Calu3 (cell line): ENCODE measurements at regions of chr10 and their contacts with region 1.

Region 1: GRCh38 chr10:3248888-3249758 is 76.5 kb upstream of the PITRM1 start:
- DNase-seq: peak; percentile 25
- H3K4me3 Mint-ChIP-seq: no peak overlapping the region
- H3K27ac Mint-ChIP-seq: peak overlapping the region; percentile 61
- H3K4me1 Mint-ChIP-seq: peaks cover 8% of the 10 kb centered on the region
- H3K27me3 Mint-ChIP-seq: peaks cover 36% of the 10 kb centered on the region
- CTCF ChIP-seq: no peak

Region 2: GRCh38 chr10:3265088-3265487 is 16.0 kb after region 1 on chr10:
- CTCF ChIA-PET with region 1: no interaction called
- intact Hi-C with region 1: loop called (anchors 1 kb)
- DNase-seq: peak; percentile 39
- H3K4me3 Mint-ChIP-seq: no peak overlapping the region
- H3K27ac Mint-ChIP-seq: no peak overlapping the region
- H3K4me1 Mint-ChIP-seq: peaks cover 19% of the 10 kb centered on the region
- H3K27me3 Mint-ChIP-seq: peaks cover 22% of the 10 kb centered on the region
- CTCF ChIP-seq: no peak